MCF 10A (cell line): ENCODE measurements at regions of chr19 and their contacts with region 1.

Region 1: DNA sequence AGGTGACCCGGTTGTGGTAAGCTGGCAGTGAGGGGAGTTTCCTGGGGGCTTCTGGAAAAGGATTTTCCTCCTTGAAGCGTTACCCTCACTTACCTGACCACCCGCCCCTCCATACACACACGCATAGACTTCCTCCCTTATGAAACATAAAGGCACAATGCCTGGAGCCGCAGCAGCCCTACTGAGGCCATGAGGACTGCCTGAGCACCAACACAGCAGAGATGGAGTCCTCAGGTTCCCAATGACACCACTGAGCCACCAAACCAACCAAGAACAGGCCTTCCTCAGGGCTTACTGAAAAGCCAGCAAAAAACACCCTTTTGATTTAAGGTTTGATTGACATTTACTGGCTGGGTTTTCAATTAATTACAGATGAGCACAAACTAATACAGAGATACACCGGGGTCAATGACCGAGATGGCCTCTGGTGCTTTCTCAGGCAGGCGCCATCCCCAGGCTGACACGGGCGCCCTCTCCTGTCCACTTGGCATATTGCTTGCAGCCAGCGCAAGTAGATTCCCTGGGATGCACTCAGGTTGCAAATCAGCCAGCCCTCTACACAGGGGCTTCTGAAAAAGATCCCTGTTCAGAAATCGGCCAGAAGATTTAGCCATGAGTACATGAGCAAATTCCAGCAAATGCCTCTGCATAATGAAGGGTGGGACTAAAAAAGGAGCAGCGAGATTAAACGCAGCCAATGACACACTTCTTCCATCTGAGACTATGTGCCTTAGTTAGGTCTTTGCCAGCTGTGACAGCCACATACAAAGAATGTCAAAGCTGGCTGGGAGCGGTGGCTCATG is 14.8 kb downstream of the OPA3 start:
- DNase-seq: peak; percentile 63
- H3K4me3 Mint-ChIP-seq: no peak overlapping the region
- H3K27ac Mint-ChIP-seq: peak overlapping the region; percentile 75
- H3K4me1 Mint-ChIP-seq: peaks cover 25% of the 10 kb centered on the region
- H3K27me3 Mint-ChIP-seq: no peaks in the 10 kb centered on the region
- CTCF ChIP-seq: peak; percentile 77

Region 2: DNA sequence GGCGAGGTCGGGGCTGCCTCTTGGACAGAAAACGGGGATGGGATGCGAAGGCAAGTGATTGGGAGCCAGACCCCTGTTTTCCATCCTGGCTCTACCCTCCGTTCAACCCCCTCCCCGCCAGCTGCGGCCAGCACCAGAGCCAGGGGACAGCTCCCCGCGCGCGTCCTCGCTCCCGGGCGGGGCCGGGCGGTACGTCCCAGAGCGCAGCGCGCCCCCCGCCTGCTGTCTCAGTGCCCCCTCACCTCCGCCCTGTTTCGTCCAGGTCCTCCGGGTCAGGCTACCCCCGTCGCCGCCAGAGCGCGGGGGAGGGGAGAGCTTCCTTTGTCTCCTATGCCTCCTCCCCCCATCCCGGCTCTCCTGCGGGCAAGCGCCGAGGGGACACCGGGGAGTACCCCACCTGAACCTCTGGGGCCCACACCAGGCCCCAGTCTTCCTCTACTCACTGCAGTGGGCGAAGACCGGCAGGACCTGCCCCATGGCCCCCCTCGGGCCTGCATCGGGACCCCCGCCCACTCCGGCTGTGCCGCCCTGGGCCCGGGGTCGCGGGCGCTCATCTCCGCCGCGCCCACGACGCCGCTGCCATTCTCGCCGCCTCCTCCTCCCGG is 73.4 kb before region 1 on chr19:
- CTCF ChIA-PET with region 1: interaction called, 3 read pairs
- POLR2A ChIA-PET with region 1: no interaction called
- intact Hi-C with region 1: loop called (anchors 1 kb)
- DNase-seq: no peak
- H3K4me3 Mint-ChIP-seq: peak overlapping the region; percentile 75
- H3K27ac Mint-ChIP-seq: peak overlapping the region; percentile 24
- H3K4me1 Mint-ChIP-seq: peaks cover 13% of the 10 kb centered on the region
- H3K27me3 Mint-ChIP-seq: no peaks in the 10 kb centered on the region
- CTCF ChIP-seq: no peak

Region 3: GRCh38 chr19:45506246-45506990 is 63.4 kb before region 1 on chr19:
- CTCF ChIA-PET with region 1: interaction called, 3 read pairs
- POLR2A ChIA-PET with region 1: no interaction called
- intact Hi-C with region 1: loop called (anchors 5 kb)
- DNase-seq: peak; percentile 96
- H3K4me3 Mint-ChIP-seq: peak overlapping the region; percentile 99
- H3K27ac Mint-ChIP-seq: peak overlapping the region; percentile 91
- H3K4me1 Mint-ChIP-seq: peaks cover 26% of the 10 kb centered on the region
- H3K27me3 Mint-ChIP-seq: no peaks in the 10 kb centered on the region
- CTCF ChIP-seq: no peak

Region 4: GRCh38 chr19:45523642-45524256 is 46.1 kb before region 1 on chr19:
- CTCF ChIA-PET with region 1: interaction called, 5 read pairs
- POLR2A ChIA-PET with region 1: interaction called, 7 read pairs
- intact Hi-C with region 1: loop called (anchors 1 kb)
- DNase-seq: peak; percentile 87
- H3K4me3 Mint-ChIP-seq: no peak overlapping the region
- H3K27ac Mint-ChIP-seq: peak overlapping the region; percentile 69
- H3K4me1 Mint-ChIP-seq: peaks cover 13% of the 10 kb centered on the region
- H3K27me3 Mint-ChIP-seq: no peaks in the 10 kb centered on the region
- CTCF ChIP-seq: peak; percentile 82

Region 5: DNA sequence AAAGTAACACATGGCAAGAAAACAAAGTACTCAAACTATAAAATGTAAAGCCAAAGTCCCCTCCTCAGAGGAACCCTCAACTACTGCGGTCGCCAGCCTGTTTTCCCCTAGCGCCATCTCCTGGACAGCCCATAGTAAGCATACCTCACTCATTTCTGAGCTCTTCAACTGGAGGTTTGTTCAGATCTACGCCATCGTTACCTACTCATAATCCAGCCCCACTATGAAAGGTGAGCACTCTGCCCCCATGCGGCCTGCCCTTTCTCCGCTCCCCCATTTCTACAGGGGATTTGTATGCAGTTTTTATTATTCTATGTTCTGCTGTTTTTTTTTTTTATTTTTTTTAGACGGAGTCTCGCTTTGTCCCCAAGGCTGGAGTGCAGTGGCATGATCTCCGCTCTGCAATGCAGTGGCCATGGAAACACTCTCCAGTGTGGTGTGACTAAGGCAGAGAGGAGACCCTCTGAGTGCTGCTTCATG is 11.4 kb before region 1 on chr19:
- CTCF ChIA-PET with region 1: interaction called, 14 read pairs
- POLR2A ChIA-PET with region 1: interaction called, 3 read pairs
- intact Hi-C with region 1: no loop called
- DNase-seq: peak; percentile 85
- H3K4me3 Mint-ChIP-seq: no peak overlapping the region
- H3K27ac Mint-ChIP-seq: no peak overlapping the region
- H3K4me1 Mint-ChIP-seq: no peaks in the 10 kb centered on the region
- H3K27me3 Mint-ChIP-seq: no peaks in the 10 kb centered on the region
- CTCF ChIP-seq: peak; percentile 64

Region 6: GRCh38 chr19:45817010-45817724 is 247.3 kb after region 1 on chr19:
- CTCF ChIA-PET with region 1: no interaction called
- POLR2A ChIA-PET with region 1: no interaction called
- intact Hi-C with region 1: no loop called
- DNase-seq: peak; percentile 93
- H3K4me3 Mint-ChIP-seq: no peak overlapping the region
- H3K27ac Mint-ChIP-seq: no peak overlapping the region
- H3K4me1 Mint-ChIP-seq: no peaks in the 10 kb centered on the region
- H3K27me3 Mint-ChIP-seq: no peaks in the 10 kb centered on the region
- CTCF ChIP-seq: peak; percentile 96